ENCODE measurements at regions of chr12 and their contacts with region 1.

Region 1: GRCh38 chr12:113152835-113153814 is 3.6 kb downstream of the CFAP73 start:
- DNase-seq: peak; percentile 75
- ATAC-seq: peak; percentile 77
- H3K4me3 Mint-ChIP-seq: peak overlapping the region; percentile 72
- H3K27ac Mint-ChIP-seq: peak overlapping the region; percentile 70
- H3K4me1 Mint-ChIP-seq: peaks cover 31% of the 10 kb centered on the region
- H3K27me3 Mint-ChIP-seq: peaks cover 21% of the 10 kb centered on the region

Region 2: GRCh38 chr12:113048716-113049127 is 104.4 kb before region 1 on chr12:
- CTCF ChIA-PET with region 1: interaction called, 25 read pairs
- POLR2A ChIA-PET with region 1: no interaction called
- DNase-seq: peak; percentile 80
- ATAC-seq: peak; percentile 88
- H3K4me3 Mint-ChIP-seq: no peak overlapping the region
- H3K27ac Mint-ChIP-seq: no peak overlapping the region
- H3K4me1 Mint-ChIP-seq: no peaks in the 10 kb centered on the region
- H3K27me3 Mint-ChIP-seq: peaks cover 10% of the 10 kb centered on the region

Region 3: DNA sequence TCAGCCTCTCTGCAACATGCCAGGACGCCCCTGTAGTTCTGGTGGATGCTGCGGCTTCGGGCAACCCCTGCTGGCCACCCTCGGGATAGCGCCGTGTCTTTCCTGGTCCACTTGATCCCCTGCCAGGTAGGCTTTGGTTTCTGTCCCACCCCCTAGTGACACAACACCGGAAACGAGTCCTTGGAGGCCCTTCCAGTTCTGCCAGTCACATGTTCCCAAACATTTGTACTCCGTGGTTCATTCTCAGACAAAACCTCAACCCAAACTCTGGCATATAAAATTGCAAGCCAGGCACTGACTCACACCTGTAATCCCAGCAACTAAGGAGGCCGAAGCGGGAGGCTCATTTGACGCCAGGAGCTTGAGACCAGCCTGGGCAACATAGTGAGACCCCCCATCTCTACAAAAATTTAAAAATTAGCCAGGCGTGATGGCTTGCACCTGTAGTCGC is 54.7 kb before region 1 on chr12:
- CTCF ChIA-PET with region 1: interaction called, 17 read pairs
- POLR2A ChIA-PET with region 1: no interaction called
- DNase-seq: peak; percentile 77
- ATAC-seq: peak; percentile 70
- H3K4me3 Mint-ChIP-seq: no peak overlapping the region
- H3K27ac Mint-ChIP-seq: no peak overlapping the region
- H3K4me1 Mint-ChIP-seq: peaks cover 7% of the 10 kb centered on the region
- H3K27me3 Mint-ChIP-seq: peaks cover 4% of the 10 kb centered on the region

Region 4: DNA sequence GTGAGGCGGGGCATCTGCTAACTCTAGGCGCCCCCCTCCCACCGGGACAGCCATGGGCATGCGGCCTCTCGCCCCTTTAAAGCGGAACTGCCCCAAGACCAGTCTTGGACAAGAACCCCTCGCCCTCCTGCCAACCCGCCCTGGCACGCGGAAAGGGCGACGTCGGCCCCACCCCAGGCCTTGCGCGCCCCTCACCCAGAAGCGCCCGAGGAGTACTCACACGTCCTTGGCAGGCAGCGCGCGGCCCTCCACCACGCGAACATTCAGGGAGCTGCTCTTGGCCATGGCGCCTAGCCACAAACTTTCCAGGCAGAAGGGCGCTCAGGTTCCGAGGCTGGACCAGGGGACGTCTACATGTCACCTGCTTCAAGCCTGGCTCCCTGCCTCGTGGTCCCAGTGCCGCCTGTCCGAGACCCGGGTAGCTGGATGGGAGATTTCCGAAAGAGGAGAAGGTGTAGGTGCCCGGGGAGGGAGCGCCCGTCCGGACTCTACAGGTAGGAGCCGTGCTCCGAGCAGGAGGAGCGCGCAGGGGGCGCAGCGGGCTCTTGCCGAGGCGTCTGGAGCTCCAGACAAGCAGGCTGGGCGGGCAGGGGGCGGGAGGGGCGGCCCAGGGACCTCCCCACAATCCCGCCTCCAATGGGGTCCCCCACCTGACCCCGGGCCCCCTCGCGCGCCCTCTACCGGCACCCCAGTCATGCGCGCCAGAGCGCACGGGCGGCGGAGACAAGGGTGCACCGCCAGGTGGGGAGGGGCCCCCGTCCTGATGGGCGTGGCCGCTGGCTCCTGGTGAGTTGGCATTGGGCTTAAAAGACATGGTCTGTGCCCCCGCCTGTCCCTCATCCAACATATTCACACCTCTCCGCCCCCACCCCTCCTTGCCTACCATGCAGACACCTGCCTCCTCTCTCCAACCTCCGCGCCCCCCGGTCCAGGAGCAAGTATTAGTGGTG is 17.7 kb before region 1 on chr12 and contains the start of gene RASAL1:
- CTCF ChIA-PET with region 1: interaction called, 27 read pairs
- POLR2A ChIA-PET with region 1: interaction called, 6 read pairs
- DNase-seq: peak; percentile 80
- ATAC-seq: peak; percentile 93
- H3K4me3 Mint-ChIP-seq: peak within 1 kb of the TSS; percentile 79
- H3K27ac Mint-ChIP-seq: peak within 1 kb of the TSS; percentile 76
- H3K4me1 Mint-ChIP-seq: peaks cover 16% of the 10 kb centered on the region
- H3K27me3 Mint-ChIP-seq: peaks cover 5% of the 10 kb centered on the region
- total RNA-seq, gene RASAL1: 0.26 to 0.47 TPM

Region 5: DNA sequence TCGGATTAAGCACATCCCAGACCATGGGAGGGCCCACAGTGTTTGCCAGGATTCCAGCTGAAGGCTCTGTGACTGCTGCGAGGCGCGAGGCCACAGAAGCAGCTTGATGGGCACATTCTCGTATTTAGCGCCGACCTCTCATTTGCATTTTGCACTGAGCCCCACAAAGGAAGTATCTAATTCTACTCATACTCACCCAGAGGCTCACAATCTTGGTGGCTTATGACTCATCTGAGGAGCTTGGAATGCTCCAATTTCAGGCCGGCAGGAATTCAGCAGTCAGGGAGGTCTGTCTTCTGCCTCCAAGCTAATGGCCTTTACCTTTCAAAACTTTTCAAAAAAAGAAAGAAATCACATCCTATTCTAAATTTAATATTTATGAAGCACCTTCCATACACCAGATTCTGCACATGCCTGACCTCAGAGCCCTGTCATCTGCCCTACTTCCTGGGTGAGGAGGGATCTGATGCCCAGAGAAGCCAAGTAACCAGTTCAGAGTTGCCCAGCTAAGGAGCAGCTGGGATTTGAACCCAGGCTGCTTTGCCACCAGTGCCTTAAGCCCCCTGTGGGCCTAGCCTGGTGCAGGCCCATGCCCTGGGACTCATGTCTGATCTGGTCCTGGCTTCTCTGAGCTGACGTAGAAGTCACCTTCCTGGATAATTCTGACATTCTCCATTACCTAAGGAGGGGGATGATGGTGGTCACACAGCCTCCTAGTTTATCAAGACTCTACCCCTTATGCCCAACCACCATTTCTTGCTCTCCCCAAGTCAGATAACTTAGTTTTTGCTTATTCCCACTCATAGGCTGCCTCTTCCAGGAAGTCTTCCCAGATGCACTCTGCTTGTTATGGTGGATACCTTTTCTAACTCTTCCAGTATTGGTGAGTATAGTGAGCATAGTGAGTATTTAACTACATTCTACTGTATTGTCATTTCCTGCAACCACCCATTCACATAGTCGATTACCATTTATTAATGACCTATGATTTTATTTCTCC is 614.1 kb after region 1 on chr12:
- CTCF ChIA-PET with region 1: no interaction called
- POLR2A ChIA-PET with region 1: no interaction called
- DNase-seq: no peak
- ATAC-seq: no peak
- H3K4me3 Mint-ChIP-seq: no peak overlapping the region
- H3K27ac Mint-ChIP-seq: no peak overlapping the region
- H3K4me1 Mint-ChIP-seq: no peaks in the 10 kb centered on the region
- H3K27me3 Mint-ChIP-seq: peaks cover 2% of the 10 kb centered on the region

Measured in activated CD8-positive, alpha-beta T cell treated with anti-CD3 and anti-CD28 coated beads, Interleukin-2, amount 10 ng/mL, durations not matched to agents 7 days and 5 days (primary cell).